BJ (cell line): ENCODE measurements at regions of chr17 and their contacts with region 1.

Region 1: DNA sequence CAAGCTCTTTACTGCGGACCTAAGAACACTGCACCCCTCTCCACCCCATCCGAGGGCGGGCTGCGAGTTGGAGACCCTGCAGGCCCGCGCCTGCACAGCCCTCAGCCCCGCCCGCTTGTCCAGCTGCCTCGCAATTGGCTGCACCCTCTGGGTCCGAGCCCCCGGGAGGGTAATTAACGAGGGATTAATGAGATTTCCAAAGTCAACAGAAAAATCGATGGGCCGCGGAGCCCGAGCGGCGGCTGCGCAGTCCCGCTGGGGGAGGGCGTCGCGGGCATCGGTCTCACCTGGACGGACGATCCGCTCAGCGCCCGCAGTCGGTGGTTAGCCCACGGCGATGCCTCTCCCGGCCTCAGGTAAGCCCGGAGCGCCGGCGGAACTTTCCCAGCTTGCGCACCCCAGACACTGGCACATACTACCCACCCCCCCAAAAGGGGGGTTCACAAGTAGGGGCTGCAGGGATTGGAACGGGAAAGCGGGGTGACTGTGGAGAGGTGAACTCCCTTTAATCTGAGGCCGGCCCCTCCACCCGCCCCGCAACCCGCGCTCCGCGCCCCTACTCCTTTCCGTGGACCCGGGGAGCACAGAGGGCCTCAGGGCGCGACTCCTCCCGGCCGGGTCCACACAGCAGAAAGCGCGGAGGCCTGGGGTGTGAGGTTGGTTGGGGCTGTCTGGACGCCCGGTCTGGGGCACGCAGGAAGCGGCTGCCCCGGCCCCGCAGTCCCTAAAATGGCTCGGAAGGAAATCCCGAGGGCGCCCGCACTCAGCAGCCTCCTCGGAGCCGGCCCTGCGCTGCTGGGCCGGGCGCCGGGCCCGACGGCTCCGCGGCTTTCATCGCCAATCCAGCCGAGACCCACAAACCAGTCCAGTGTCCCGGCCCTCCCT is at the start of gene OTOP3:
- DNase-seq: no peak
- H3K4me3 ChIP-seq: no peak within 1 kb of the TSS
- H3K27me3 ChIP-seq: peaks cover 49% of the 10 kb centered on the region
- CTCF ChIP-seq: no peak
- polyA plus RNA-seq, gene OTOP3: not detected in 2 replicates

Region 2: DNA sequence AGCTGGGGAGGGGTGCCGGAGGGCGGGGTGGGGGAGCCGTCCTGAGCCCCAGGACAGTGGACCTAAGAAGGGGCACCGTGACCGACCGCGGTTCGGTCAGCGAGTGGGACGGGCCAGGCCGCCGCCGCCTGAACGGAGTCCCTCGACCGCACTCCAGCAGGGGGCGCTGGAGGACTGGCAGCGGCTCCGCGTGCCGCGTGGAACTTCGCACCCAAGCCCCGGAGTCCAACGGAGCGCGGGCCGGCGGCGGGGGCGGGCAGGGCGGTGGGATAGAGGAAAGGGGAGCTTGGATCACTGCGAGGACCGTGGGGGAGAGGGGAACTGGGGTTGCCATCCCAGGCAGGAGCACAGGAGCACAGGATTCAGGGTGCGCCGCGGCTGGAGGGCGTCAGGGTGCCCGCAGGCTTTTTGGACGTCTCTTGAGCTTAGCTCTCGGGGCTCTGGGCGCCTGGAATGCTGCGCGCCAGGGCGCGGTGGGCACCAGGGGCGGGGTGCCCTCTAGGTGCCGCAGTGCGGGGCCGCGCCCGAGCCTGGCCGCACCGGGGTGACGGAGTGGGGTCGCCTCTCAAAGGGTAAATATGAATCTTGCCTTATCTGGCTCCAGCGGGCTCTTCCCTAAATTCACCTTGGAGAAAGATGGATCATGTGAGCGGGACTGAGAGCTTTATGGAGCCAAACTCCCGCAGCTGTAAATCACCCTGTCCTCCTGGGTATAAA is 12.1 kb before region 1 on chr17:
- CTCF ChIA-PET with region 1: interaction called, 12 read pairs
- POLR2A ChIA-PET with region 1: no interaction called
- DNase-seq: no peak
- H3K4me3 ChIP-seq: no peak overlapping the region
- H3K27me3 ChIP-seq: peaks cover 41% of the 10 kb centered on the region
- CTCF ChIP-seq: peak; percentile 75

Region 3: DNA sequence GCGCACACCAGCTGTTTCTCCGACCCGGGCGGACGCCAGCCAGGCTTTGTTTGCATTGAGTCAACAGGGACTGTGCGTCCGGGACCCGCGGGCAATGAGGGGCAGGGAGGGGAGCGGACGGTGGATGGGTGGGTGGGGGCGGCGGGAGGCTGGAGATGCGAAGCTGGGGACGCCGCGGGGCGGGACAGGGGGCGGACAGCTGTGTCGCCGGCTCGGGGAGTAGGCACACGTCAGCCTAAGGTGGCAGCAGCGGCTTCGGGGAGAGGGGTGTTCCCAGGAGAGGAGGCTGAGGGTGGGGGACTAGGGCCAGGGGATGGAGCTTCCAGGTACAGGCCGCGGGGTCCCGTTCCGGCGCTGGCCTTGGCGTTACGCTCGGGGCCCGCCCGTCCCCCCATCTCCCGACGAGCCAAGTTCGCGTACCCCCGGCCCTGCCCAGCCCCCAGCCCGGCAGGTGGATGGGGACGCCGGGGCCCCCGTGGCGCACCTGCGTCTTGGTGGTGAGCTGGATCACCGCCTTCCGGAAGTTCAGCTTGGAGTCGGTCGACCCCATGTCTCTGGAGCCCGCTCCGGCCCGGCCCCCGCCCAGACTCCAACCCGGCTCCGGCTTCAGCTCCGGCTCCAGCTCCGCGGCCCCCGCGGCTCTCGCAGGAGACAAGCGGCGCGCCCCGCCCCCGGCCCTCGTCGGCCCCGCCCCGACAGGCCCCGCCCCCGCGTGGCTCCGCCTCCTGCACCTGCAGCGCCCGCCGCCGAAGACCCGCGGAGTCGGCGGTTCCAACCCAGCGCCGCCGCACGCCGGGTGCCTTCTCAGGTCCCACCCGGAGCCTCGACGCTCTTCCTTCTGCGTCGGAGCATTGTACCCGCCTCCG is 36.5 kb after region 1 on chr17 and contains the start of gene HID1:
- CTCF ChIA-PET with region 1: no interaction called
- POLR2A ChIA-PET with region 1: no interaction called
- DNase-seq: no peak
- H3K4me3 ChIP-seq: peak within 1 kb of the TSS; percentile 55
- H3K27me3 ChIP-seq: peaks cover 9% of the 10 kb centered on the region
- CTCF ChIP-seq: no peak
- polyA plus RNA-seq, gene HID1: 1.7 and 1.8 TPM in 2 replicates

Region 4: DNA sequence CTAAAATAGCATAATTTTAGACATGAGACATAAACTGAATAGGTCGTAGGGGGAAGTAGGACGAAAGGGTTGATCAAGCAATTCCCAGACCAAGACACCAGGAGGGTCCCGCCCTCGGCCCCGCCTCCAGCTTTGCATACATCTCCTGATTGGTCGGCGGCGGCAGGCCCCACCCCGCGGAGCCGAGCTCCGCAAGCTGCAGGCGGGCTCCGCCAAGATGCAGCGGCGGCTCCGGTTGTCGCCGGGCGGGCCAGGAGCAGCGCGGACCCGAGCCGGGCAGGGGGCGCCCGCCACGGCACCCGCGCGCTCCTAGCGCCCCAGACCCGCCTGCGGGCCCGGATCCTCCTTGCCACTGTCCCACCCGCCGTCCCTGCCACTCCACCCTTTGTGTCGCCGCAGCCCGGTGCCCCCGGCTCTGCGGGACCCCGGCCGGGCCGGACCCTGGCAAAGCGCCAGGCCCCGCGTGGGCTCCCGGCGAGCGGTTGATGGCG is 51.6 kb after region 1 on chr17 and contains the start of gene CDR2L:
- CTCF ChIA-PET with region 1: no interaction called
- POLR2A ChIA-PET with region 1: no interaction called
- DNase-seq: peak; percentile 70
- H3K4me3 ChIP-seq: peak within 1 kb of the TSS; percentile 82
- H3K27me3 ChIP-seq: no peaks in the 10 kb centered on the region
- CTCF ChIP-seq: no peak
- polyA plus RNA-seq, gene CDR2L: 12.5 and 19.6 TPM in 2 replicates

Region 5: DNA sequence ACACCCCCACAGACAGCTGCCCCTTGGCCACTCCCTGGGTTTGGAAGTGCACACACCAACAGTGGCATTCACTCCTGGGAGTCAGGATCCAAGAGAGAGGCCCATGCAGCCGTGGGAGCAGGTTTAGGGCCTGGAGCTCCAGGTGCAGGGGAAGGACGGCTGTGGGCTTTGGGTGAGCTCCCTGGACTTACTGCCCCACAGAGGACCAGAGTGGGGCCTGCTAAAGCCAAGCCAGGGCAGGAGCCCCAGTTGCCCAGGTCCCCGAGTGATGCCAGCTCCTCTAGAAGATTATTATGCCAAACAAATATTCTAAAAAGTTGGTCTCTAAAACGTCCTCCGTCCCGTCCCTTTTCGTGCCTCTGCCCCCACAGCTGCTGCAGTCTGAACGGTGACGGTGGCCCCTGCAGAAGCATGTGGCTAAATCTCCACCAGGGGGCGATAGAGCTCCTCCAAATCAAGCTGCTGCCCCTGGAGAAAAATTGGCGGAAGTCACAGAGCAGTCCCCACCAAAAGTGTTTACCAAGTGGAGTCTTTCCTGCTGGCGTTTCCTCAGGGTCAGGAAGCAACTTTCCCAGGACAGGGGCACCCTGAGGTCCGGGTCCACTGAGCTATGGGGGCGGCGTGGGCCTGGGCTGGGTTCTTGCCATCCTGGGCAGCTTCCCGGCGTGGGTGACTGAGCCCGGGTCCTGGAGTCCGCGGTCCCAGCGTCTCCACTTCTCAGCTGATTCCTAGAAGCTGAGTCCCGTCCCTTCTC is 178.1 kb after region 1 on chr17:
- CTCF ChIA-PET with region 1: no interaction called
- POLR2A ChIA-PET with region 1: no interaction called
- DNase-seq: peak; percentile 36
- H3K4me3 ChIP-seq: peak overlapping the region; percentile 44
- H3K27me3 ChIP-seq: no peaks in the 10 kb centered on the region
- CTCF ChIP-seq: peak; percentile 92